Tibial artery (tissue), 4 donors: ENCODE measurements at regions of chr10 and their contacts with region 1.

Region 1: GRCh38 chr10:29998142-29998808 is 61.1 kb downstream of the JCAD start:
- DNase-seq: peak; percentile 77 to 87
- H3K4me3 ChIP-seq: no peak overlapping the region
- H3K27ac ChIP-seq: no peak overlapping the region
- H3K4me1 ChIP-seq: peaks cover 3 to 48% (median 29%) of the 10 kb centered on the region in 4 donors
- H3K27me3 ChIP-seq: no peaks in the 10 kb centered on the region
- CTCF ChIP-seq: peak; percentile 98

Region 2: GRCh38 chr10:29635711-29636144 is 362.5 kb before region 1 on chr10:
- intact Hi-C with region 1: loop called (anchors 10 kb)
- DNase-seq: no peak
- H3K4me3 ChIP-seq: no peak overlapping the region
- H3K27ac ChIP-seq: peak overlapping the region; percentile 86 to 87
- H3K4me1 ChIP-seq: peaks cover 0 to 48% (median 23%) of the 10 kb centered on the region in 4 donors
- H3K27me3 ChIP-seq: no peaks in the 10 kb centered on the region
- CTCF ChIP-seq: no peak

Region 3: DNA sequence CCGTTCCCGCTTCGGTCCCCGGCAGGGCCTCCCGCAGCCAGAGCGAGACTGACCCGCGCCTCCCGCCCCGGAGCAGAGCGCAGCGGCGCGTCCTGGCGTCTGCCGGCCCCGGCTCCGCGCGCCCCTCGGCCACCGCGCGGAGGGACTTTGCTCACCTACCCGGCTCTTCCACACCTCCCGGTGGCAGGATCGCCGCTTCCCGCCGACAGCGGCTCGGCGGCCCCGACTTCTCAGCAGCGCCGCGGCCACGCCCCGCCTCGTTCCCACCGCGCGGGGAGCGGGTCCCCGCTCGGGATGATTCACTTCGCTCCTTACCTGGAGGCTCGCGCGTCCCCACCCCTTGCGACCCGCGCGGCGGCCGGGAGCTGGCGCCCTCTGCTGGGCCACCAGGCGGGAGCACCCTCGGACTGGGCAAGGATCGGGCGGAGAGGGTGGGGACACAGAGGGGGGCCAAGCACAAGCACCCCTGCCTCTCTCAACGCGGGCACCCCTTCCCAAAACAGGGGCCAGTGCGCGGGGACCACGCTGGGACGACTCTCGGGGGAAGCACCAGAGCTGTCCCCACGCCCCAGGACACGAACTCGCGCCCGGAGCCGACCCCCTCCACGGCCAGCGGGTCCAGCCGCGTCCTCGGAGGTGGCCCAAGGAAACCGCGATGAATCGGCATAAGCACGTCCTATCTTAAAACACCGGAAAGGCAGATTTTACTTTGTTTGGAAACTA is 262.5 kb before region 1 on chr10:
- intact Hi-C with region 1: loop called (anchors 5 kb)
- DNase-seq: peak; percentile 84 to 95
- H3K4me3 ChIP-seq: peak overlapping the region; percentile 84 to 90
- H3K27ac ChIP-seq: peak overlapping the region; percentile 97
- H3K4me1 ChIP-seq: peaks cover 0 to 50% (median 30%) of the 10 kb centered on the region in 4 donors
- H3K27me3 ChIP-seq: no peaks in the 10 kb centered on the region
- CTCF ChIP-seq: peak; percentile 93 to 96

Region 4: DNA sequence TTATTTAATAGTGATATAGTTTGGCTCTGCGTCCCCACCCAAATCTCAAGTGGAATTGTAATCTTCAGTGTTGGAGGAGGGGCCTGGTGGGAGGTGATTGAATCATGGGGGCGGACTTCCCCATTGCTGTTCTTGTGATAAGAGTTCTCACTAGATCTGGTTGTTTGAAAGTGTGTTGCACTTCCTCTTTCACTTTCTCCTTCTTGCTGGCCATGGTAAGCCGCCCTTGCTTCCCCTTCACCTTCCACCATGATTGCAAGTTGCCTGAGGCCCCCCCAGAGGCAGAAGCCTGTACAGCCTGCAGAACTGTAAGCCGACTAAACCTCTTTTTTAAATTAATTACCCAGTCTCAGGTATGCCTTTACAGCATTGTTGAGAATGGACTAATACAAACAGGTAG is 249.4 kb after region 1 on chr10:
- intact Hi-C with region 1: loop called (anchors 10 kb)
- DNase-seq: no peak
- H3K4me3 ChIP-seq: no peak overlapping the region
- H3K27ac ChIP-seq: no peak overlapping the region
- H3K4me1 ChIP-seq: no peaks in the 10 kb centered on the region
- H3K27me3 ChIP-seq: no peaks in the 10 kb centered on the region
- CTCF ChIP-seq: no peak

Region 5: DNA sequence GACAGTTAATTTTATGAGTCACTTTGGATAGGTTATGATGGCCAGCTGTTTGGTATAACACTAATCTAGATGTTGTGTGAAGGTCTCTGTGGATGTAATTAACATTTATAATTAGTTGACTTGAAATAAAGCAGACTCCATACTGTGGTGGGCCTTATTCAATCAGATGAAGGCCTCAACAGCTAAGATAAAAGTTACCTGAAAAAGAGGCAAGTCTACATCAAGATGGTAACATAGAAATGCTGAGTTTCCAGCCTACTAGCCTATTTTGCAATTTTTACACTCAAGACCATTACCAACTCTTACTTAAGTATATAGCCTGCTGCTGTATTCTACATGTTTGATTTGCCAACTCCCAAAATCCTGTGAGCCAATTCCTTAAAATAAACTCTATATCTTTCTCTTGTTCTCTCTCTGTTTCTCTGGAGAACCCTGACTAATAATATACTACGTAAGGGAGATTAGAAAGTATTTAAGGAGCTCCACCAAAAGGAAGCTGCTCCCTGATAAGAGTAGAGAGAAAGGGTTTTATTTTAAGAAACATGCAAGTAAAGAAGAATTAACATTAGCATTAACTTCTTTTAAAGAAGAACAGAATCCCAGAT is 990.7 kb after region 1 on chr10:
- intact Hi-C with region 1: no loop called
- DNase-seq: no peak
- H3K4me3 ChIP-seq: no peak overlapping the region
- H3K27ac ChIP-seq: peak overlapping the region; percentile 49 to 50
- H3K4me1 ChIP-seq: peaks cover 0 to 63% (median 17%) of the 10 kb centered on the region in 4 donors
- H3K27me3 ChIP-seq: no peaks in the 10 kb centered on the region
- CTCF ChIP-seq: no peak